ENCODE measurements at regions of chr9 and their contacts with region 1.

Region 1: GRCh38 chr9:27726244-27727081 is 153.2 kb upstream of the C9orf72 start:
- DNase-seq: peak in 4 of 5 donors; percentile 79 to 95 (median 87)
- H3K4me3 ChIP-seq: peak overlapping the region in 1 of 3 donors; percentile 22
- H3K27ac ChIP-seq: no peak overlapping the region
- H3K4me1 ChIP-seq: peaks cover 0 to 2% (median 0%) of the 10 kb centered on the region in 3 donors
- H3K27me3 ChIP-seq: no peaks in the 10 kb centered on the region
- CTCF ChIP-seq: peak; percentile 86

Region 2: GRCh38 chr9:27785714-27786100 is 59.2 kb after region 1 on chr9:
- intact Hi-C with region 1: loop called (anchors 10 kb)
- DNase-seq: no peak
- H3K4me3 ChIP-seq: no peak overlapping the region
- H3K27ac ChIP-seq: no peak overlapping the region
- H3K4me1 ChIP-seq: no peaks in the 10 kb centered on the region
- H3K27me3 ChIP-seq: no peaks in the 10 kb centered on the region
- CTCF ChIP-seq: no peak

Region 3: GRCh38 chr9:28073270-28073669 is 346.8 kb after region 1 on chr9:
- intact Hi-C with region 1: loop called (anchors 10 kb)
- DNase-seq: peak in 3 of 5 donors; percentile 24 to 82 (median 72)
- H3K4me3 ChIP-seq: no peak overlapping the region
- H3K27ac ChIP-seq: no peak overlapping the region
- H3K4me1 ChIP-seq: no peaks in the 10 kb centered on the region
- H3K27me3 ChIP-seq: no peaks in the 10 kb centered on the region
- CTCF ChIP-seq: peak; percentile 45